ENCODE measurements at regions of chr9 and their contacts with region 1.

Region 1: DNA sequence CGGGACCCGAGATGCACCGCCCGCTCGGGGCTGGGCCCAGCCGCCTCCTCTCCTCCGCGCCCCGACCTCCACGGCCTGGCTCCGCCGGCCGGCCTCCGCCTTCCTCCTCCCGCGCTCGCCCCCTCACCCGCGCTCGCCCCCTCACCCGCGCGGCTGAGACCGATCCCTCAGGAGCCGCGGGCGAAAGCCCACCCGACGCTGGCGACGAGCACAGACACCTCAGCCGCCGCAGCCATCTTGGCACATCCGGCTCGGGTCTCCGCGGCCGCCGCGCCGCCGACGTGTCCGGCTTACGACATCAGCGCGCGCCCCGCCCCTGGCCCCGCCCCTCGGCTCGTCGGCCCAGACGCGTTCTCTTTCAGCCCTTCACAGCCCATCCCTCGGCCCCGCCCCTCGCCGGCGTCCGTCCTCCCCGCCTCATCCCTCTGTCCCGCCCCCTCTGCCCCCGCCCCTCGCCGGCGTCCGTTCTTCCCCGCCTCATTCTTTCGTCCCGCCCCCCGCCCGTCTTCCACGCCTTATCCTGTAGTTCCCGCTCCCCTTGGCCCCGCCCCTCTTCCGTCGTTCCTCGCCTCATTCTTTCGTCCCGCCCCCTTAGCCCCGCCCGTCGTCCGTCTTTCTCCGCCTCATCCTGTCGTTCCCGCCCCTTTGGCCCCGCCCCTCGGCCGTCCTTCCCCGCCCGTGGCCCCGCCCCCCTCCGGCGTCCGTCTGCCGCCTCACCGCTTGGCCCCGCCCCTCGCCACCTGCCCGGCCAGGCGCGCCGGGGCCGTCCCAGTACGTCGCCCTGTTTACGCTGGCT is at the start of gene SEC16A:
- DNase-seq: peak; percentile 82 to 98
- ATAC-seq: peak; percentile 53 to 62
- H3K4me3 ChIP-seq: peak within 1 kb of the TSS; percentile 96
- H3K27ac ChIP-seq: peak within 1 kb of the TSS; percentile 91 to 98
- H3K4me1 ChIP-seq: peaks cover 15% of the 10 kb centered on the region
- CTCF ChIP-seq: no peak
- EP300 ChIP-seq: no peak
- POLR2A ChIP-seq: peak; percentile 88
- RAD21 ChIP-seq: no peak
- polyA plus RNA-seq, gene SEC16A: 24.2 and 32.3 TPM in 2 replicates

Region 2: GRCh38 chr9:136426787-136427186 is 56.2 kb before region 1 on chr9:
- CTCF ChIA-PET with region 1: no interaction called
- POLR2A ChIA-PET with region 1: no interaction called
- DNase-seq: no peak
- ATAC-seq: no peak
- H3K4me3 ChIP-seq: no peak overlapping the region
- H3K27ac ChIP-seq: no peak overlapping the region
- H3K4me1 ChIP-seq: no peaks in the 10 kb centered on the region
- CTCF ChIP-seq: no peak
- EP300 ChIP-seq: no peak
- POLR2A ChIP-seq: no peak
- RAD21 ChIP-seq: no peak

Region 3: DNA sequence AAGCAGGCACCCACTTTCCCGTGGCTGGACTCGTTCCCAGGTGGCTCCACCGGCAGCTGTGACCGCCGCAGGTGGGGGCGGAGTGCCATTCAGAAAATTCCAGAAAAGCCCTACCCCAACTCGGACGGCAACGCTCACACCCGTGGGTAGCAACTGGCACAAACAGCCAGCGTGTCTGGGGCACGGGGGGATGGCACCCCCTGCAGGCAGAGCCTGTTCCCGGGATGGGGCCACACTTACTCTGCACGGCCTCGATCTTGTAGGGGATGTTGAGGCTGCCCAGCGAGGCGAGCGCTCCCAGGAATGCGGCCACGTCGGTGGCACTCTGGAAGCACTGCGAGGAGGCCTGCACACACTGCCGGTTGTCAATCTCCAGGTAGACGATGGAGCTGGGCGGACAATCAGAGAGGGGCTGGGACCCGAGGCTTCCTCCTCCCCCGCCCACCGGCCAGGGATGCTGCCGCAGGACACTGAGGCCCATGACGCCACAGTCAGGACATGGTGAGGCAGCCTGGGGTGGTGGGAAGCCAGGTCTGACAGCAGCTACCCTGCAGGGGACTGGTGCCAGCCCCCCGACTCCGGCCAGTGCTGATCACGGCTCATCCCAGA is 20.1 kb after region 1 on chr9:
- CTCF ChIA-PET with region 1: interaction called, 128 read pairs
- POLR2A ChIA-PET with region 1: no interaction called
- DNase-seq: no peak
- ATAC-seq: peak in 1 of 2 experiments; percentile 25; a peak in 3 of 6 replicates
- H3K4me3 ChIP-seq: no peak overlapping the region
- H3K27ac ChIP-seq: no peak overlapping the region
- H3K4me1 ChIP-seq: peaks cover 5% of the 10 kb centered on the region; the same call in 1 of the 3 replicates
- CTCF ChIP-seq: no peak
- EP300 ChIP-seq: no peak
- POLR2A ChIP-seq: no peak
- RAD21 ChIP-seq: 0 out of 5 replicates have a peak, but pooled peaks of 1 of the 2 experiments have one; percentile 8

Region 4: DNA sequence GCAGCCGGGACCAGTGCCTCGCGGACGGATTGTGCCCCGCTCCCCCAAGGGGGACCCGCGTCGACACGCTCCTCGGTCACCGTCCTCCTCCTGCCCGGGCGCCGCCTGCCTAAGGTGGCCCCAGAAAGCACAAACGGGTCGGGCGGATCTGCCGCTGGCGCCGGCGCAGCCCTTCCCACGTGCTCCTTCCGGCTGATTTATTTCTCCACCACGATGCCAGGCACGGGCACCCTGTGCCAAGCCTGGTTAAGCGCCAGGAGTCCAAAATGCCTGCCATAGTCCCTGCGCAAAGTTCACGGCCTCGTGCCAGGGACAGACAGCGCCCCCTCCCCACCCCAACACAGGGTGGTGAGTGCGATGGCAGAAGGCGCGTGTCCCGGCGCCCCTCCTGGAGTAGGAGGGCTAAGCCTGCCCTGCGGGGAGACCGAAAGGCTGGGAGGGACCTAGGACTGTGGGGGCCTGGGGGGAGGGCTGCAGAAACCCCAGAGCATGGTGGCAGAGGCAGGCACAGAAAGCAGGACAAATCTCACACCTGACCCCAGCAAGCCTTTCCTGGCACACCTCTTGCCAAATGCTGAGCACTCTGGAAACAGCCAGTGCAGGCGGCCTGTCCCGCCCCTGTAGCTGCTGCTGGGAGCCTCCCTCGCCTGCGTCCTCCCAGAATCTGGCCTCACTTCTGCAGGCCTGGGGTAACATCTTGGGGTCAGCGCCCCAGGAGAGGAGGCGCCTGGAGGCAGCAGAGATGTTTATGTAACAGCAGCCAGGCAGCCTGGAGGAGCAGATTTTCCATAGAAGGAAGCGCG is 63.9 kb after region 1 on chr9:
- CTCF ChIA-PET with region 1: interaction called, 70 read pairs
- POLR2A ChIA-PET with region 1: interaction called, 4 read pairs
- DNase-seq: peak in 1 of 2 experiments; percentile 57
- ATAC-seq: peak; percentile 27 to 51
- H3K4me3 ChIP-seq: peak overlapping the region; percentile 91
- H3K27ac ChIP-seq: peak overlapping the region; percentile 95 to 98
- H3K4me1 ChIP-seq: peaks cover 45% of the 10 kb centered on the region
- CTCF ChIP-seq: no peak
- EP300 ChIP-seq: no peak
- POLR2A ChIP-seq: 0 out of 2 replicates have a peak, but pooled peaks have one; percentile 21
- RAD21 ChIP-seq: no peak

Region 5: GRCh38 chr9:136619742-136620440 is 136.9 kb after region 1 on chr9:
- CTCF ChIA-PET with region 1: interaction called, 776 read pairs
- POLR2A ChIA-PET with region 1: interaction called, 17 read pairs
- DNase-seq: no peak
- ATAC-seq: no peak
- H3K4me3 ChIP-seq: no peak overlapping the region
- H3K27ac ChIP-seq: peak overlapping the region in 1 of 2 experiments; percentile 42; a peak in 1 of 6 replicates
- H3K4me1 ChIP-seq: peaks cover 16% of the 10 kb centered on the region
- CTCF ChIP-seq: no peak
- EP300 ChIP-seq: no peak
- POLR2A ChIP-seq: no peak
- RAD21 ChIP-seq: no peak

Region 6: GRCh38 chr9:136644598-136645351 is 161.8 kb after region 1 on chr9:
- CTCF ChIA-PET with region 1: interaction called, 313 read pairs
- POLR2A ChIA-PET with region 1: no interaction called
- DNase-seq: peak in 1 of 2 experiments; percentile 88
- ATAC-seq: peak; percentile 83 to 96
- H3K4me3 ChIP-seq: peak overlapping the region; percentile 32; the same call in 2 of the 3 replicates
- H3K27ac ChIP-seq: peak overlapping the region; percentile 63 to 84; a peak in 5 of 6 replicates
- H3K4me1 ChIP-seq: peaks cover 12% of the 10 kb centered on the region
- CTCF ChIP-seq: peak; percentile 67
- EP300 ChIP-seq: no peak
- POLR2A ChIP-seq: no peak
- RAD21 ChIP-seq: peak; percentile 87 to 88

Region 7: GRCh38 chr9:136671646-136672430 is 188.8 kb after region 1 on chr9:
- CTCF ChIA-PET with region 1: interaction called, 22 read pairs
- POLR2A ChIA-PET with region 1: no interaction called
- DNase-seq: peak in 1 of 2 experiments; percentile 78
- ATAC-seq: peak in 1 of 2 experiments; percentile 63; a peak in 3 of 6 replicates
- H3K4me3 ChIP-seq: no peak overlapping the region
- H3K27ac ChIP-seq: peak overlapping the region in 1 of 2 experiments; percentile 47; a peak in 1 of 6 replicates
- H3K4me1 ChIP-seq: peaks cover 48% of the 10 kb centered on the region
- CTCF ChIP-seq: peak; percentile 66
- EP300 ChIP-seq: no peak
- POLR2A ChIP-seq: no peak
- RAD21 ChIP-seq: peak; percentile 27 to 31; a peak in 3 of 5 replicates

Measured in A549 (cell line).